ENCODE measurements at regions of chr17 and their contacts with region 1.

Region 1: GRCh38 chr17:6843241-6843880 is 11.8 kb upstream of the TEKT1 start:
- DNase-seq: no peak
- H3K4me3 ChIP-seq: no peak overlapping the region
- H3K27ac ChIP-seq: no peak overlapping the region
- H3K4me1 ChIP-seq: peaks cover 0 to 3% of the 10 kb centered on the region in 2 donors
- H3K27me3 ChIP-seq: no peaks in the 10 kb centered on the region
- CTCF ChIP-seq: peak in 5 of 6 experiments; percentile 7 to 64 (median 48)
- POLR2A ChIP-seq: no peak

Region 2: DNA sequence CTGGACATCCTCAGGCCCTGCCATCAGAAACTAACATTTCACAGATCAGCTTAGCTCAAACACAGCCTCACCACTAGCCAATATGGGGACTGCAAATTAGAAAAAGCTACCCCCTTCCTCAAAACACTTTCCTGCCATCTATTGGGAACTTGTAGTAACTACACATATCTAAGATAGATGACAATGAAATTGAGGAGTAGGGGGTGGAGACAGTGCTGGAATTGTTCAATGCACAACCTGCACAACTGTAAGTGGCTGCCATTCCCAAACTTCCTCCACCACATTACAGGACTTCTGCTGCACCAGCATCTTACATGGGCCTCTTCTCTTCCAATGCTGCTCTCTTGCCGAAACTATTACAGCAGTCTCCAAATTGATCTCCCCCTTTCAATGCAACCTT is 430.3 kb before region 1 on chr17:
- intact Hi-C with region 1: no loop called
- DNase-seq: no peak
- H3K4me3 ChIP-seq: no peak overlapping the region
- H3K27ac ChIP-seq: no peak overlapping the region
- H3K4me1 ChIP-seq: no peaks in the 10 kb centered on the region
- H3K27me3 ChIP-seq: no peaks in the 10 kb centered on the region
- CTCF ChIP-seq: no peak
- POLR2A ChIP-seq: no peak

Region 3: DNA sequence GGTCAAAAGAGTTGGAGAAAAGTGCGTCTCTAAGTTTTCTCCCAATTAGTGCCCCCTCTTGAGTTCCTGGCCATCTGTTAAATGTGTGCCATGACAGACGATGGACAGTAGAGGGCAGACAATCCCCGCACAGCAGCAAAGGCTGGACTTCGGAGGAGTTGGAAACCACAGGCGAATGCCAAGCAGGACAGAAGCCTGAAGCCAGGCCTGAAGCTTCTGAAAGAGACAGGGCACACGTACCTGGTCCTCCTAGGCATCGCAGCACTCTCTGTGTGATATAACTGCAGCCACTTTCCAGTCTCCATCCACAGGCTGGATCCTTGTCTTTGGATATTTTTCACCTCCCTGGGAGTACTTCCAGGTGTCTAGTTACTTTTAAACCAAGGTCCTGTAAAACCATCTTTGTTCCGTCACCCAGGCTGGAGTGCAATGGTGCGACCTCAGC is 177.3 kb before region 1 on chr17:
- intact Hi-C with region 1: loop called (anchors 10 kb)
- DNase-seq: peak; percentile 68 to 78
- H3K4me3 ChIP-seq: no peak overlapping the region
- H3K27ac ChIP-seq: no peak overlapping the region
- H3K4me1 ChIP-seq: no peaks in the 10 kb centered on the region
- H3K27me3 ChIP-seq: no peaks in the 10 kb centered on the region
- CTCF ChIP-seq: peak; percentile 59 to 89 (median 82)
- POLR2A ChIP-seq: no peak

Region 4: GRCh38 chr17:6894206-6894528 is 50.8 kb after region 1 on chr17:
- intact Hi-C with region 1: no loop called
- DNase-seq: no peak
- H3K4me3 ChIP-seq: no peak overlapping the region
- H3K27ac ChIP-seq: no peak overlapping the region
- H3K4me1 ChIP-seq: no peaks in the 10 kb centered on the region
- H3K27me3 ChIP-seq: no peaks in the 10 kb centered on the region
- CTCF ChIP-seq: peak in 2 of 6 experiments; percentile 8 to 14
- POLR2A ChIP-seq: no peak

Measured in thyroid gland (tissue), 4 donors.